ENCODE measurements at regions of chr11 and their contacts with region 1.

Region 1: DNA sequence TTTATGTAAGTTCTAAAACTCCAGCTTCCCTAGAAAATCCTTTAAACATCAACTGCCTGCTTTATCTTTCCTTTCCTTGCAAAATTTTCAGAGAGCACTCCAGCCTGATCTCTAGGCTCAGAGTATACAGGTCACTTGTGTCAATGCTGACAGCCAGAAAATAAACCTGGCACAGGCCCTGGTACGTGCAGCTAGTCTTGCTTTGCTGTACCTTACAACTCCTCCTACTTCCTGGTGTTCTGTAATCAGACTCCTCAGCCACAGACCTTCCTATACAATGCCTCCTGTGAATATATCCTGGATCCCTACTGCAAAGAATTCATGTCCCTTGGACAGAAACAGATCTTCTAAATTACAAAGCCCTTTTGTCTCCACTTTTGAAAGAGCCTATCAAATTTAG is 24.2 kb upstream of the TMEM123 start:
- DNase-seq: peak in 3 of 4 experiments; percentile 16 to 62 (median 43)
- ATAC-seq: peak; percentile 94
- H3K4me3 ChIP-seq: no peak overlapping the region
- H3K27ac ChIP-seq: peak overlapping the region; percentile 51
- H3K4me1 ChIP-seq: peaks cover 7 to 18% of the 10 kb centered on the region in 2 experiments
- H3K27me3 ChIP-seq: no peaks in the 10 kb centered on the region
- CTCF ChIP-seq: no peak
- EP300 ChIP-seq: no peak
- POLR2A ChIP-seq: no peak
- RAD21 ChIP-seq: no peak

Region 2: DNA sequence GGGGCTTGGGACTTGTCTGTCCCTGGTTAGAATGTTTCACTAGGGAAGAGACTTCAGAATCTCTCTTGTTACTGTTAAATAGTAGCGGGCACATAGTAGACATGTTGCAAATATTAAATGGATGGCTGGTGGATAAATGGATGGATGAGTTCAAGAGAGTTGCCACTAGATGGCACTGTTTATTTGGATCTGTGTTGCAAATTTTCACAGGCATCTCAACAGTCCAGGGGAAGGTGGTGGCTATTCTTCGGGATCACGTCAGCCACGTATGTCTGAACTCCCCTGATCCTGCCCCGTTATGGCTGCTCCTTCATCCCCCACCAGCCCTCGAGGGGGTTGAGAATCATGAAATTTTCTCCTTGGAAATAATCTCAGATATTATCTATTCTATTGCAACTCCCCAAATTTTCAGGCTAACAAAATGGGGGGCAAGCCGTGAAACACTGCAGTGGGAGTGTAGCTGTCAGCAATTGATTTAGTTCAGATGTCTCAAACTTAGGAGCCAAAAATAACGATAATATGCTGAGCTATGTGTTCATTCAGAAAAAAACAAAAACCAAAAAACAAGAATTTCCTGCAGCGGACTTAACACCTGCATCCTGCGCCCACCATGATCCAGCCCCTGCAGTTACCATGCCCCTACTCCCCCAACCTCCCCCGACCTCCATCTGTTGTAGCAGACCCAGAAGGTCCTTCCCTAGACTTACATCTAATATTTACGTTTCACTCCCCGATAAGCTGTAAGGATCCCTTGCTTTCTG is 188.7 kb before region 1 on chr11:
- CTCF ChIA-PET with region 1: no interaction called
- POLR2A ChIA-PET with region 1: no interaction called
- in situ Hi-C with region 1: no loop called
- intact Hi-C with region 1: no loop called
- DNase-seq: peak; percentile 56 to 76 (median 64)
- ATAC-seq: peak; percentile 95
- H3K4me3 ChIP-seq: no peak overlapping the region
- H3K27ac ChIP-seq: no peak overlapping the region
- H3K4me1 ChIP-seq: peaks cover 0 to 6% of the 10 kb centered on the region in 2 experiments; a peak in 2 of 5 replicates
- H3K27me3 ChIP-seq: peaks cover 0 to 5% of the 10 kb centered on the region in 2 experiments; a peak in 2 of 5 replicates
- CTCF ChIP-seq: peak; percentile 59 to 87 (median 68)
- EP300 ChIP-seq: no peak
- POLR2A ChIP-seq: no peak
- RAD21 ChIP-seq: peak; percentile 77 to 80

Region 3: GRCh38 chr11:102390667-102391465 is 85.9 kb before region 1 on chr11:
- CTCF ChIA-PET with region 1: no interaction called
- POLR2A ChIA-PET with region 1: no interaction called
- in situ Hi-C with region 1: no loop called
- intact Hi-C with region 1: loop called (anchors 5 kb)
- DNase-seq: peak; percentile 63 to 87 (median 67)
- ATAC-seq: peak; percentile 96
- H3K4me3 ChIP-seq: no peak overlapping the region
- H3K27ac ChIP-seq: no peak overlapping the region
- H3K4me1 ChIP-seq: peaks cover 8 to 18% of the 10 kb centered on the region in 2 experiments; a peak in 4 of 5 replicates
- H3K27me3 ChIP-seq: no peaks in the 10 kb centered on the region
- CTCF ChIP-seq: peak; percentile 88 to 92 (median 90)
- EP300 ChIP-seq: no peak; the same call in 1 of the 2 replicates
- POLR2A ChIP-seq: no peak
- RAD21 ChIP-seq: peak; percentile 66 to 75

Region 4: DNA sequence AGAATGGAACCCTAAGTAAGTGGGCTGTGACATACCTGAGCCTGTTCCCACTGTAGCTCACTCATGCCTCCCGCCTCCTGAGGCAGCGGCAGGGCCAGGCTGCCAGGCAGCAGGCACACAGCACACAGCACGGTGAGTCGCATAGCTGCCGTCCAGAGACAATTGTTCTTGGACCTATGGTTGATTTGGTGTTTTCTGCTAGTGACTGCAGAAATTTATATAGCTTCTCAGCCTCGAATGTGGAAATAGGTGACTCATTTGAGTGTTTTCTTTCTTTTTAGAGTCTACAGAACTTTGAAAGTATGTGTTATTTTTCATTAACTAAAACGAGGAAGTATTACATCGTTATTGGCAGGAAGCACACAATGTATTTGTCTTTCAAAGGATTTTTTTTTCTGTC is 53.7 kb after region 1 on chr11 and contains the start of gene MMP7:
- CTCF ChIA-PET with region 1: no interaction called
- POLR2A ChIA-PET with region 1: no interaction called
- in situ Hi-C with region 1: no loop called
- intact Hi-C with region 1: no loop called
- DNase-seq: no peak
- ATAC-seq: no peak
- H3K4me3 ChIP-seq: no peak within 1 kb of the TSS
- H3K27ac ChIP-seq: no peak within 1 kb of the TSS
- H3K4me1 ChIP-seq: no peaks in the 10 kb centered on the region
- H3K27me3 ChIP-seq: no peaks in the 10 kb centered on the region; a peak in 2 of 5 replicates
- CTCF ChIP-seq: no peak
- EP300 ChIP-seq: no peak
- POLR2A ChIP-seq: no peak
- RAD21 ChIP-seq: no peak
- polyA plus RNA-seq, gene MMP7: not detected

Region 5: DNA sequence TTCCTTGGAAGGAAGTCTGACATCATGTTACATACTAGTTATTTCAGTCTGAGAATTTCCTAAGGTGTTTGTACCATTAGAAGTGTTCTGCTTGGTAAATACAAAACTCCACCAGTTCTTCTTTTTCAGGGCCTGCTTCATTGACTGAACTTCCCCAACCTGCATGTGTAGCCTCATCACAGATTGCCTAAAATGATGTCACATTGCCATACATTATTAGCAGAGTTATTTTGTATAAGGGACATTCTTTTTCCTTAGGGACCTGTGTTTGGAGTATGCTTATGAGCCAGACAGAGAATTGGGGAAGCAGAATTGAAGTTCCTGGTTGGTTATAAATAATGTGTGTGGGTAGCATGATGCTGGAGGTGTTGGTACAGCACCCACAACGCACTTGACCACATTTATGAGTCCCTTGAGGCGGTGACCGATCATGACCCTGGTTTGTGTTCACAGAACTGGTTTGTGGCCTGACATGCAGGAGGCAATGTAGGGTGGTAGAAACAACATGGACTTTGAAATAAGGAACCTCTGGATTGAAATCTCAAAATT is 70.2 kb after region 1 on chr11:
- CTCF ChIA-PET with region 1: no interaction called
- POLR2A ChIA-PET with region 1: no interaction called
- in situ Hi-C with region 1: no loop called
- intact Hi-C with region 1: no loop called
- DNase-seq: no peak
- ATAC-seq: no peak
- H3K4me3 ChIP-seq: no peak overlapping the region
- H3K27ac ChIP-seq: no peak overlapping the region
- H3K4me1 ChIP-seq: no peaks in the 10 kb centered on the region
- H3K27me3 ChIP-seq: no peaks in the 10 kb centered on the region
- CTCF ChIP-seq: no peak
- EP300 ChIP-seq: no peak
- POLR2A ChIP-seq: no peak
- RAD21 ChIP-seq: no peak

Region 6: DNA sequence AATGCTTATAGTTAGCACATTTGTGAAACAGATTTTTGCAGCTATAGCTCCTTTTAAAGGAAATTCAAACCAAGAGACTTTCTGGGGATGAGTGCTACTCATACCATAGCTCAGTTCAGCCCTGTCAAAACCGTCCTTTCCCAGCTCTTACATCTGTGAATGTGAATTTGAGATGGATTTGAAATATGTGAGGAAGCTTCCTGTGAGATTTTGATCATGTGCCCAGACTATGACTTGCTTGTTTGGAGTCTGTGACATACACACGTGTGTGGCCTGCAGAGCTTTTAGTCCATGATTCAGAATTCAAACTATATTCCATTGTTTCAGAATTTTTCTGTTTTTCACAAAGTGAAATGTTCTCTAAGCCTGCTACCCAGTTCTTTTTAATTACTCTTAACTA is 325.5 kb after region 1 on chr11:
- CTCF ChIA-PET with region 1: no interaction called
- POLR2A ChIA-PET with region 1: no interaction called
- in situ Hi-C with region 1: no loop called
- intact Hi-C with region 1: no loop called
- DNase-seq: no peak
- ATAC-seq: no peak
- H3K4me3 ChIP-seq: no peak overlapping the region
- H3K27ac ChIP-seq: no peak overlapping the region
- H3K4me1 ChIP-seq: no peaks in the 10 kb centered on the region
- H3K27me3 ChIP-seq: no peaks in the 10 kb centered on the region
- CTCF ChIP-seq: no peak
- EP300 ChIP-seq: no peak
- POLR2A ChIP-seq: no peak
- RAD21 ChIP-seq: no peak

Measured in K562 (cell line).